CD8-positive, alpha-beta memory T cell (primary cell): ENCODE measurements at regions of chr5 and their contacts with region 1.

Region 1: DNA sequence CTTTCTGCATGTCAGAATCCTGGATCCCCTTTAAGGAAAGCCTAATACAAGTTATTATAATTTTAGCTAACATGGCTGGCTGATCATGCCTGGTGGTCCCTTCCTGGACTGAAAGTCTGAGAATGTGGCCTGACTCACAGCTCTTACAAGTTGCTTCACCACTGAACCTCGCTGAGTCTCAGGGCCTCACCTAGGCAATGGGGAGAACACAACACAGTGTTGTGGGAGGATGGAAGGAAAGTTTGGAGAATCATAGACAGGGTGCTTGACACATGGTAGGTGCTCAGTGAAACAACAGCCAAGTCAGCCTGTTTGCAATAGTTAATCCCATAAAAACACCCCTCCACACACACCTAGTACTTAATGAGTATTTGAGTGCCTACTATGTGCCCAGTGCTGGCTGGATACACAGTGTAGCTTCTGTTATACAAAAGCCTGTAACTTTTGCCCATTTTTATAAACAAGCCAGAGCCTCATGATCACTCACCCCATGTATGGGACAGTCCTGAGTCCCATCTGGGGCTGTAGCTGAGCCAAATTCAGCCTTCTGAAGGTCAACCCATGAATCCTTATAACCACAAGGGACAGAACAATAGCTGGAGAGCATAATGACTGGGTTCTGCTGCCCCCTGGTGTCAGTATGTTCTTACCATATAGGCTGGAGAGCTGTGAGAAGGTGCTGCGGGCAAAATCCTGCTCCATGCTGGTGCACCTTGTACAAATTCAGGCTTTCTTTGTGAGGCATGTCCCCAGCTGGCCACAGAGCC is 3.9 kb downstream of the ACSL6 start:
- DNase-seq: peak; percentile 55 to 76 (median 63)
- H3K4me3 ChIP-seq: no peak overlapping the region
- H3K4me3 Mint-ChIP-seq: peak overlapping the region in 1 of 7 donors; percentile 19
- H3K27ac ChIP-seq: no peak overlapping the region
- H3K27ac Mint-ChIP-seq: peak overlapping the region in 5 of 8 donors; percentile 29 to 82 (median 64)
- H3K4me1 ChIP-seq: peaks cover 19% of the 10 kb centered on the region
- H3K4me1 Mint-ChIP-seq: peaks cover 26 to 36% (median 34%) of the 10 kb centered on the region in 3 donors
- H3K27me3 ChIP-seq: peaks cover 3% of the 10 kb centered on the region
- H3K27me3 Mint-ChIP-seq: peaks cover 10 to 17% of the 10 kb centered on the region in 2 donors

Region 2: DNA sequence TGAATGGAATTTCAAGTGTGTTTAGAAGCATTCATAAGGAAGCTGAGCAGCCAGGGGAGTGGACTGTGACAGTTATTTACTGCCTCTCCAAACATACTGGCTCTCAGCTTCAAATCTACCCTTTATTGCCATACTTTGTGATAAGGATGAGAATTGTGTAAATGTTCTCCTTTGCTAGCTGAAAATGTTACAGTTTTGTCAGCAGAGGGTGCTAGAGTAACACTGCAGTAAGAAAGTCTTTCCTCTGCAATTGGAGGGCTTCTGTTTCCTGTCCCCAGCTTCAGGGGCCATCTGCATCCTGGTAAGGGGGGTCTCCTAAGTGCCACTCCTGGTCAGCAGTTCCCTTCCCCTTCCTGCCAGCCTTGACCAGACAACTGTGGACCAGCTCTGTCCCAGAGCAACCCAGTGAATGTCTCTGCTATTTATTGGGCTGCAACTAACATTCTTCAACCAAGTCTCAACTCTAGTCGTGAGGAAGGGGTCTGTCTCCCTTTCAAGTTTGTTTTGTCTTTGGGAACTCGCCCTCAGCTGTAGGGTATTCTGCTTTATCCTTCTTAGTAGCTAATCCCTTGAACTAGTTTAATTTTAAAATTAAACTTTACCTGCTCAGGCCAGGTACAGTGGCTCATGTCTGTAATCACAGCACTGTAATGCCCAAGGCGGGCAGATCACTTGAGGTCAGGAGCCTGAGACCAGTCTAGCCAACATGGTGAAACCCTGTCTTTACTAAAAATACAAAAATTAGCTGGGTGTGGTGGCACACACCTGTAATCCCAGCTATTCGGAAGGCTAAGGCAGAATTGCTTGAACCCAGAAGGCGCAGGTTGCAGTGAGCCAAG is 417.9 kb before region 1 on chr5:
- CTCF ChIA-PET with region 1: interaction called, 157 read pairs
- POLR2A ChIA-PET with region 1: no interaction called
- DNase-seq: peak in 3 of 5 donors; percentile 47 to 65 (median 58)
- H3K4me3 ChIP-seq: no peak overlapping the region
- H3K4me3 Mint-ChIP-seq: no peak overlapping the region
- H3K27ac ChIP-seq: no peak overlapping the region
- H3K27ac Mint-ChIP-seq: peak overlapping the region in 6 of 8 donors; percentile 30 to 66 (median 52)
- H3K4me1 ChIP-seq: peaks cover 19% of the 10 kb centered on the region
- H3K4me1 Mint-ChIP-seq: peaks cover 39 to 53% (median 51%) of the 10 kb centered on the region in 3 donors
- H3K27me3 ChIP-seq: no peaks in the 10 kb centered on the region
- H3K27me3 Mint-ChIP-seq: peaks cover 0 to 1% of the 10 kb centered on the region in 2 donors

Region 3: DNA sequence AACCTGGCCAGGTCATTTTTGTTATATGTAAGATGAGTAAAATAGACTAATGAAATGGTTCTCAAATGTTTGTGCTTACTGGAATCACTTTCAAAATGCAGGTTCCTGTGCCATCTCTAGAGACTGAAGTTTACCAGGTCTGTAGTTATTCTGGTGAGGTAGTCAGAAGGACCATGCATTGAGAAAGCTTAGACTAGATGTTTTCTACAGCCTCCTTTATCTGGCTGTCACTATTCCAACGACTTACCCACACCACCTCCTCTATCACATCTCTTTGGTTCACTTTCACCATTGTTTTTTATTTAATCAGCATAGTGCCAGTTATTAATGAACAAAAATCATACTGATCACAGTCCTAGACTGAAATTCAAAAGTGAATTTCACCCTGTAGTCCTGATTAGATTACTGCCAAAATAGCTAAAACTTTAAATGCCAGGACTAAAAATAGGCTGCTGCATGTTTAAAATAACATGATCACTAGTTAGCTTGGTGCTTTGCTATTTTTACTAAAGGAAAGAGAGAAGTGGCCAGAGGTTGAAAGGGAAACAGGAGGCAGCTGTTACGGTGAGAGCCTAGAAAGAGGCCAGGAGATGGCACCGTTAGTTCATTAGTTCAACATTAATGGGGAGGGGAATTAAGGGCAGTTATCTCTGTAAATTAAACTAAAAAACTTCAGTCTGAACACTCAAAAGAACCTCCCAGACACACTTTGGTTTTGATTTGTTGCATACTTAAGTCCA is 196.9 kb before region 1 on chr5:
- CTCF ChIA-PET with region 1: interaction called, 19 read pairs
- POLR2A ChIA-PET with region 1: no interaction called
- DNase-seq: no peak
- H3K4me3 ChIP-seq: no peak overlapping the region
- H3K4me3 Mint-ChIP-seq: no peak overlapping the region
- H3K27ac ChIP-seq: no peak overlapping the region
- H3K27ac Mint-ChIP-seq: no peak overlapping the region
- H3K4me1 ChIP-seq: no peaks in the 10 kb centered on the region
- H3K4me1 Mint-ChIP-seq: no peaks in the 10 kb centered on the region
- H3K27me3 ChIP-seq: no peaks in the 10 kb centered on the region
- H3K27me3 Mint-ChIP-seq: peaks cover 0 to 3% of the 10 kb centered on the region in 2 donors

Region 4: DNA sequence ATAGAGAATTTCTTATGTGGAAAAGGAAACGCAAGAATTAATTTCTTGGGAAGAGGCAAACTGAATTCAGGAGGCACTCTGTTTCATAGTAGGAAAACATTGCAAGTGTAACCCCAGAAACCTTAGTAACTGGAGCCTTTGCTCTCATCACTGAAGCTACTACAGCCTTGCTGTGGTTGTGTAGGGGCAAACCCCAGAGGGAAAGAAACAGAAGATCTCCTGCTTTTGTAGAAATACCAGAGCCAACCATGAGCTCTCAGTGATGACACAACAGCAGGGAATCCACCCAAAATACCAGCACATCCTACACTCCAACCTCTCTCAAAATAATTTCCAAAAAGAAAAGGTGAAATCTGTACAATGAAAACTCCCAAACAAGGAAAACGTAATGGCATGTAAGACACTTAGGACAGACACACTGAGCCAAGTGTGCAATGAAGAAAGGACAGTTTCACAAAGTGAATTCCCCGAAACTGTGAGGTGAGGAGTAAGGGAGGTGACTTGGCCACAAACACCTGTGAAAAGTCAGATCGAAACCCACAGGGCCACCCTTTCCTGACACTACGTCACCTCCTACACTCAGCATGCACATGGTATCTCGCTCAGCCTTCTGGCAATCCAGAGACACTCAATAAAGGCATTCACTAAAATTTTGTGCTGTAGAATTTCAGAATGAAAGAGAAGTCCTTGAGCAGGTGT is 12.4 kb after region 1 on chr5:
- CTCF ChIA-PET with region 1: interaction called, 12 read pairs
- POLR2A ChIA-PET with region 1: interaction called, 3 read pairs
- DNase-seq: peak; percentile 47 to 83 (median 65)
- H3K4me3 ChIP-seq: no peak overlapping the region
- H3K4me3 Mint-ChIP-seq: peak overlapping the region; percentile 9 to 68 (median 60)
- H3K27ac ChIP-seq: peak overlapping the region; percentile 34
- H3K27ac Mint-ChIP-seq: peak overlapping the region; percentile 79 to 98 (median 96)
- H3K4me1 ChIP-seq: peaks cover 37% of the 10 kb centered on the region
- H3K4me1 Mint-ChIP-seq: peaks cover 48 to 70% (median 62%) of the 10 kb centered on the region in 3 donors
- H3K27me3 ChIP-seq: no peaks in the 10 kb centered on the region
- H3K27me3 Mint-ChIP-seq: no peaks in the 10 kb centered on the region

Region 5: GRCh38 chr5:132134384-132134783 is 126.8 kb after region 1 on chr5:
- CTCF ChIA-PET with region 1: no interaction called
- POLR2A ChIA-PET with region 1: no interaction called
- DNase-seq: peak in 1 of 5 donors; percentile 6
- H3K4me3 ChIP-seq: no peak overlapping the region
- H3K4me3 Mint-ChIP-seq: no peak overlapping the region
- H3K27ac ChIP-seq: no peak overlapping the region
- H3K27ac Mint-ChIP-seq: no peak overlapping the region
- H3K4me1 ChIP-seq: no peaks in the 10 kb centered on the region
- H3K4me1 Mint-ChIP-seq: peaks cover 1 to 8% (median 4%) of the 10 kb centered on the region in 3 donors
- H3K27me3 ChIP-seq: no peaks in the 10 kb centered on the region
- H3K27me3 Mint-ChIP-seq: peaks cover 3 to 12% of the 10 kb centered on the region in 2 donors